MCF 10A (cell line): ENCODE measurements at regions of chr3 and their contacts with region 1.

Region 1: DNA sequence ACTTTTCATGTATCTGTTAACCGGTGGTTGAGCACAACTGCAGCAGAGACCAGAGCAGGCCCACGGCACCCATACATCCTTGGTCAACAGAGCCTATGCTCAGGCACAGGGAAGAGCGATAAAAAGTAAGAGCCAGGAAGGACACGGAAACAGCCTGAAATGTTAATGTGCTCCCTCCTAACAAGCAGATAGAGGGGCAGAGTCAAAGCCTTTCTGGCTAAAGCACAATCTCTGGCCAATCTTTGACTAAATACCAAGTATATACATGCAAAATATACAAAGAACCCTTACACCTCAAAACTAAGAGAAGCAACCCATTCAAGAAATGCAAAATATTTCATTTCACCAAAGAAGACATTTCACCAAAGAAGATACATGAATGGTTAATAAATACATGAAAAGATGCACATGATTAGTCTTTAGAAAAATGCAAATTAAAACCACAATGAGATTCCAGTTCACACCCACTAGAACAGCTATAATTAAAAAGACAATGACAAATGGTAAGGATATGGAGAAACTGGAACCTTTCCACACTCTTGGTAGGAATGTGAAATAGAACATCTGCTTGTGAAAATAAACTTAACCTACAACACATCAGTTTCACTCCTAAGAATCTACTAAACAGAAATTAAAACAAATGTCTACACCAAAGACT is 88.0 kb downstream of the OSBPL10 start:
- DNase-seq: no peak
- H3K4me3 Mint-ChIP-seq: no peak overlapping the region
- H3K27ac Mint-ChIP-seq: peak overlapping the region; percentile 88
- H3K4me1 Mint-ChIP-seq: peaks cover 70% of the 10 kb centered on the region
- H3K27me3 Mint-ChIP-seq: no peaks in the 10 kb centered on the region
- CTCF ChIP-seq: no peak

Region 2: DNA sequence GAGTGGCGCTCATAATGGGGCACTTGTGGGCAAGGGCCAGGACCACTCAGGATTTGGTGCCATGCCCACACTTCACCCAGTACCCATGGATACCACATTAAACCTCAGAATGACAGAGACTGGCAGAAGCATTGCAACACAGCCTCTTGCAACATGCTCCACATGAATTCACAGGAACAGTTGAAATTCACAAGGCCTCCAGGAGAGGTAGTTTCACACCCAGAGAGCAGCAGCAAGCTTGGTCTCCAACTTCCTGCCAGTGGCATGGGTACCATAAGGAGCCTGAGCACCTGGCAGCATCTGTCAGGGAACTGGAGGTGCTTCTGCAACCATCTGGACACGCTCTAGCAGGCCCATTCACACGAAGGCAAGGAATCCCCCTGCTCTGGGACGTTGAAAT is 13.0 kb before region 1 on chr3:
- CTCF ChIA-PET with region 1: interaction called, 10 read pairs
- POLR2A ChIA-PET with region 1: interaction called, 156 read pairs
- intact Hi-C with region 1: loop called (anchors 2 kb)
- DNase-seq: peak; percentile 95
- H3K4me3 Mint-ChIP-seq: peak overlapping the region; percentile 30
- H3K27ac Mint-ChIP-seq: peak overlapping the region; percentile 44
- H3K4me1 Mint-ChIP-seq: peaks cover 56% of the 10 kb centered on the region
- H3K27me3 Mint-ChIP-seq: no peaks in the 10 kb centered on the region
- CTCF ChIP-seq: peak; percentile 35

Region 3: DNA sequence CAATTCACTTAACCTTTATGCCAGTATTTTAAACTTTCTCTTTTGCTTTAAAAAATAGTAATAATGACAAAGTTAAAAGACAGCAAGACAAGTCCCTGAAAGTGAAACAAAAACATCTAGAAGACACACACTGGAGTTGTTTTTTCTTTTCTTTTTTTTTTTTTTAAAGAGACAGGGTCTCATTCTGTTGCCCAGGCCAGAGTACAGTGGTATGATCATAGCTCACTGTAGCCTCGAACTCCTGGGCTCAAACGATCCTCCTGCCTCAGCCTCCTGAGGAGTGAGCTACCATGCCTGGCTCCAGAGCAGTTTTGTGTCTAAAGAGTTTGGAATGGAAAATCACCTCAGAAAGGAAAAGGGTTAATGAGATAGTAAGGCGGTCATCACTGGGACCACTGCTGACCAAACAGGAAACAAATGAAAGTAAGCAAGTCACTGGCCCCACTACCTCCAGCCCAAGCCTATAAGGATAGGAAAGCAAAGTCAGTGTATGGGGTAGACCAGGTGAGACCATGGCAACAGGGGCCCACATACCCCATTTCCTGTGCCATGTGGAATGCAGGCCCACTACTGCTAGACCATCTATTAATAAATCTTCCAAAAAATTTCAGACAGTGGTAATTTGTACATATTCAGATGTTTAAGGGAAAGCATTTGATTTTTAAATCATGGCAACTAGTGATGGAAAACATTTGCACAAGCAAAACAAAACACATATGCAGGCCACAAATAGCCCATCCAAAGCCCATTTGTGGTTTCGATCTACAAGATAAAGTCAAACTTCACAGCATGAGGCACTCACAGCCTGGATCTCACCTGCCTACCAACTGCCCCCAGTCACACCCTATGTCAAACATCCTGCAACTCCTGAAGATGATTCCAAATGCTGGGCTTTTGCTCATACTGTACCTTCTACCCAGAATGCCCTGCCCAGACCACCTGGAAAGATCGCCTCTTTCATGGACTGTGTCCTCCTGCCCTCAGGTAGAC is 25.4 kb after region 1 on chr3:
- CTCF ChIA-PET with region 1: no interaction called
- POLR2A ChIA-PET with region 1: interaction called, 22 read pairs
- intact Hi-C with region 1: no loop called
- DNase-seq: no peak
- H3K4me3 Mint-ChIP-seq: peak overlapping the region; percentile 43
- H3K27ac Mint-ChIP-seq: peak overlapping the region; percentile 78
- H3K4me1 Mint-ChIP-seq: peaks cover 55% of the 10 kb centered on the region
- H3K27me3 Mint-ChIP-seq: no peaks in the 10 kb centered on the region
- CTCF ChIP-seq: no peak

Region 4: GRCh38 chr3:31968927-31969418 is 75.9 kb after region 1 on chr3:
- CTCF ChIA-PET with region 1: interaction called, 3 read pairs
- POLR2A ChIA-PET with region 1: interaction called, 34 read pairs
- intact Hi-C with region 1: no loop called
- DNase-seq: peak; percentile 86
- H3K4me3 Mint-ChIP-seq: peak overlapping the region; percentile 69
- H3K27ac Mint-ChIP-seq: peak overlapping the region; percentile 99
- H3K4me1 Mint-ChIP-seq: peaks cover 32% of the 10 kb centered on the region
- H3K27me3 Mint-ChIP-seq: no peaks in the 10 kb centered on the region
- CTCF ChIP-seq: no peak

Region 5: GRCh38 chr3:31981206-31982181 is 88.4 kb after region 1 on chr3 and contains the starts of genes OSBPL10 and ZNF860:
- CTCF ChIA-PET with region 1: interaction called, 5 read pairs
- POLR2A ChIA-PET with region 1: interaction called, 43 read pairs
- intact Hi-C with region 1: loop called (anchors 2 kb)
- DNase-seq: peak; percentile 95
- H3K4me3 Mint-ChIP-seq: peak within 1 kb of the TSS; percentile 93
- H3K27ac Mint-ChIP-seq: peak within 1 kb of the TSS; percentile 91
- H3K4me1 Mint-ChIP-seq: peaks cover 46% of the 10 kb centered on the region
- H3K27me3 Mint-ChIP-seq: no peaks in the 10 kb centered on the region
- CTCF ChIP-seq: no peak
- total RNA-seq, gene OSBPL10: 128 and 172 TPM in 2 replicates
- total RNA-seq, gene ZNF860: 11.7 and 12.5 TPM in 2 replicates